ENCODE measurements at regions of chr16 and their contacts with region 1.

Region 1: DNA sequence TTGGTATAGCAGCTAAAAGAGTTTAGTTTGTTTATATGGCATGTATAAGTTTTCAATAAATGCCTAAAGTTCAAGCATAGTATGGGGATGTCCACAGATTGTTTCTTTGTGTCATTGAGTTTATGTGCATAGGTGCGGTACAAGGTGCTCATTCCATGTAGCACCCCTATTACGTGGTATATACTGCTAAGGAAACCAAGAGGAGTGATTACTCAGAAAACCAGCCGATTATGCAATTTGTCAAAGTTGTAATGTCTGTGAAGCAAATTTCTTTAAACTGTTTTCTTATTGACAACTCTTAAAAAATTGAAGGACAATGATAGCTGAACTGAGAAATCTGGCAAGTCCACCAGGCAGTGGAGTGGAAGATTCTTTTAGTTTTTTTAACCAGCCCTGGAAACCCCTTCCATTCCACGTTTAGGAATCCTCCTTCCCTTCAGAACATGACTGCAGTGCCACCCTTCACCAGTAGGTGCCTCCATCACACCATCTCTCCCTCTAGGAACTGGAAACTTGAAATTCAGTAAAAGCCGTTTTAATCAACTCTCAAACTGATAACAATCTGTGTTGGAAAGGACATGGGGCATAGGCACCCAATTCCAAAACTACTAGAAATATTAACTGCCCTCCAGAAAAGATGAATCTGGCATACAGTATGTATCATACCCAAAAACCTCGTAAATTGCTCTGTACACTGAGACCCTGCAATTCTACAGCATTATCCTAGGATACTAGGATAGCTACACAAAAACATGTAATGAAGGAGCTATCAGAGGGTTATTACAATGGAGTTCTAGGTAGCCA is 43.5 kb downstream of the REXO5 start:
- DNase-seq: peak in 1 of 2 donors; percentile 42
- ATAC-seq: peak in 1 of 2 donors; percentile 43
- H3K4me3 ChIP-seq: no peak overlapping the region
- H3K27ac ChIP-seq: peak overlapping the region in 3 of 4 donors; percentile 38 to 75 (median 72)
- H3K4me1 ChIP-seq: peaks cover 23 to 42% of the 10 kb centered on the region in 2 donors
- H3K27me3 ChIP-seq: no peaks in the 10 kb centered on the region
- CTCF ChIP-seq: peak; percentile 89 to 96 (median 96)
- POLR2A ChIP-seq: no peak

Region 2: GRCh38 chr16:20910781-20911321 is 61.1 kb after region 1 on chr16:
- in situ Hi-C with region 1: loop called in 2 of 4 experiments (anchors 10 kb)
- intact Hi-C with region 1: no loop called
- DNase-seq: no peak
- ATAC-seq: peak; percentile 73
- H3K4me3 ChIP-seq: no peak overlapping the region
- H3K27ac ChIP-seq: peak overlapping the region; percentile 55 to 64 (median 59)
- H3K4me1 ChIP-seq: peaks cover 24 to 31% of the 10 kb centered on the region in 2 donors
- H3K27me3 ChIP-seq: no peaks in the 10 kb centered on the region
- CTCF ChIP-seq: no peak
- POLR2A ChIP-seq: no peak

Region 3: DNA sequence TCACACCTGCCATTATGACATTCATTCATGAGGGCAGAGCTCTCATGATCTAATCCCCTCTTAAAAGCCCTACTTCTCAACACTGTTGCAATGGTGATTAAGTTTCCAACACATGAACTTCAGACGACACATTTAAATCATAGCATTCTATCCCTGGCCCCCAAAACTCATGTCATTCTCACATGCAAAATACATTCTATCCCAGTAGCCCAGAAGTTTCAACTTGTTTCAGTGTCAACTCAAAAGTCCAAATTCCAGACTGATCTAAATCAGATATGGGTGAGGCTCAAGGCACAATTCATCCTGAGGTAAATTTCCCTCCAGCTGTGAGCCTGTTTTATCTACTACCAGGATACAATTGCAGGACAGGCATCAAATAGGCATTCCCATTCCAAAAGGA is 76.0 kb after region 1 on chr16:
- in situ Hi-C with region 1: no loop called
- intact Hi-C with region 1: no loop called
- DNase-seq: no peak
- ATAC-seq: no peak
- H3K4me3 ChIP-seq: no peak overlapping the region
- H3K27ac ChIP-seq: no peak overlapping the region
- H3K4me1 ChIP-seq: peaks cover 6 to 7% of the 10 kb centered on the region in 2 donors
- H3K27me3 ChIP-seq: no peaks in the 10 kb centered on the region
- CTCF ChIP-seq: no peak
- POLR2A ChIP-seq: no peak

Region 4: DNA sequence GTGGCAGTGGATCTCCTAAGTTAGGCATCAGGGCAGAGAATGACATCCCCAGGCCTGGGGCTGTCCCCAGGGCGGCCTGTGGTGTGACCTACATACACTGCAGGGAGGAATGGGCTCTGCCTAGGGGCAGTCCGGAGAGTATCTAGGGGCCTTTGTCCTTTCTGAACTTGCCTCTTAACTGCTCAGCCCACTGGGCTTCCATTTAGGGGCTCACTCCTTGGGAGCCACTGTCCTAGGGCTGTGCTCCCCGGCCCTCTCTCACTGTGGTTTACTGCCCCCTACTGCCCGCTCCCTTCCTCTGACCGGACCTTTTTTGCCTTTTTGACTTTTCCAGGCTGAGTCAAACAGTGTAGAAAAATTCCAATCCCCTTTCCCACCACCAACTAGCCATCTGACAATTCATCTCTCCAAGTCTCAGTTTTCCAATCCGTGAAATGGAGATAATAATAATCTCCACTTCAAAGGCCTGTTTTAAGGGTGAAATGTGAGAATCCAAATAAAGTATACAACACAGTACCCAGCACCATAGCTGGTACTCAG is 234.0 kb after region 1 on chr16:
- in situ Hi-C with region 1: loop called in 3 of 4 experiments (anchors 5 to 10 kb)
- intact Hi-C with region 1: loop called (anchors 1 kb)
- DNase-seq: peak; percentile 20 to 33
- ATAC-seq: peak; percentile 74 to 77
- H3K4me3 ChIP-seq: no peak overlapping the region
- H3K27ac ChIP-seq: no peak overlapping the region
- H3K4me1 ChIP-seq: no peaks in the 10 kb centered on the region
- H3K27me3 ChIP-seq: no peaks in the 10 kb centered on the region
- CTCF ChIP-seq: peak; percentile 51 to 75 (median 74)
- POLR2A ChIP-seq: no peak

Region 5: DNA sequence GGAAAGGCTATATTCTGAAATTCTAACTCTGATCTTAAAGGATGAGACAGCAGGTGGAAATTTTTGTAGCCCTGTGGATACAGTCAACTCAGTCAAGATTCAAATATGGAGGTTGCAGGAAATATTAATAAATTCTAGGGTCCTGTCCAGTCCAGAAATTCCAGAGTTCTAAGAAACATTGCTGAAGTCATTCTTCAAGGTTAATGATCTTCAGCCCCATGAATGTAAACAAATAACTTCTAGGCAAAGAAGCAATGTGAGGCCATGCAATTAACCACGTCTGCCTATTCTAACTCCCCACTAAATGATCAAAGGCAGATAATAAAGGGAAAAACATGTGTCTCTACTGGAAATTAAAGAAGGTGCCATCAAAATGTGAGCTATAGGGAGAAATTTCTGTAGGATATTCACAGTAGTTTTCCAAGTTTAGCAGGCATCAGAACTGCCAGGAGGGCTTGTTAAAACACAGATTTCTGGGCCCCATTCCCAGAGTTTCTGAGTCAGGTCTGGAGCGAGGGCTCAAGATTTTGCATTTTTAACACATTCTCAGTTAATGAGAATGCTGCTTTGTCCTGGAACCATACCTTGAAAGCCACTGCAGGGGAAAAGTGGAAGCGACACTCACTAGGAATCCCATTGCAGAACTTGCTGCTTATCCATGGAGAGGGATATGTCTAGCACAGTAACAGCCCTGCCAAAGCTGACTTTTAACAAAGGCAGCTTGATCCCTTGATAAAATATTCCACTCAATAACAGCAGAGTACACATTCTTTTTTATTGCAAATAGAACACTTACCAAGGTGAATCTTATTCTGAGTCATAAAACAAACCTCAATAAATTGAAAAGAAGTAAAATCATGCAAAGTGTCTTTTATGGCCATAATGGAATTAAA is 239.1 kb after region 1 on chr16:
- in situ Hi-C with region 1: loop called in 3 of 4 experiments (anchors 5 to 10 kb)
- intact Hi-C with region 1: no loop called
- DNase-seq: no peak
- ATAC-seq: no peak
- H3K4me3 ChIP-seq: no peak overlapping the region
- H3K27ac ChIP-seq: no peak overlapping the region
- H3K4me1 ChIP-seq: no peaks in the 10 kb centered on the region
- H3K27me3 ChIP-seq: no peaks in the 10 kb centered on the region
- CTCF ChIP-seq: no peak
- POLR2A ChIP-seq: no peak

Region 6: GRCh38 chr16:21277927-21278706 is 428.3 kb after region 1 on chr16 and contains the start of gene CRYM:
- in situ Hi-C with region 1: loop called in 1 of 4 experiments (anchors 25 kb)
- intact Hi-C with region 1: no loop called
- DNase-seq: no peak
- ATAC-seq: peak in 1 of 2 donors; percentile 66
- H3K4me3 ChIP-seq: peak within 1 kb of the TSS; percentile 24 to 44 (median 39)
- H3K27ac ChIP-seq: no peak within 1 kb of the TSS
- H3K4me1 ChIP-seq: peaks cover 3 to 5% of the 10 kb centered on the region in 2 donors
- H3K27me3 ChIP-seq: peaks cover 12 to 20% (median 20%) of the 10 kb centered on the region in 3 donors
- CTCF ChIP-seq: peak in 4 of 5 experiments; percentile 17 to 81 (median 54)
- POLR2A ChIP-seq: no peak
- total RNA-seq, gene CRYM: not detected

Region 7: DNA sequence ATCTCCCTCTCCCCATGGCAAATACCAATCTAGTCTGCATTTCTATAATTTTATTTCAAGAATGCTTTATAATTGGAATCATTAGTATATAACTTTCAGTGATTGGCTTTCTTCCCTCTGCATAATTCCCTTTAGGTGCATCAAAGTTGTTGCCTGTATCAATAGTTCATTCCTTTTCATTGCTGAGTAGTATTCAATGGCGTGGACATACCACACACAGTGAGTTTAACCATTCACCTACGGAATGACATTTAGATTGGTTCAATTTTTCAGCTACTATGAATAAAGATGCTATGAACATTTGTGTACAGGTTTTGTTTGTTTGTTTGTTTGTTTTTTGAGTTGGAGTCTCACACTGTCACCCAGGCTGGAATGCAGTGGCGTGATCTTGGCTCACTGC is 823.7 kb after region 1 on chr16:
- in situ Hi-C with region 1: no loop called
- intact Hi-C with region 1: no loop called
- DNase-seq: no peak
- ATAC-seq: no peak
- H3K4me3 ChIP-seq: no peak overlapping the region
- H3K27ac ChIP-seq: no peak overlapping the region
- H3K4me1 ChIP-seq: no peaks in the 10 kb centered on the region
- H3K27me3 ChIP-seq: peaks cover 0 to 3% (median 0%) of the 10 kb centered on the region in 3 donors
- CTCF ChIP-seq: no peak
- POLR2A ChIP-seq: no peak

Measured in gastrocnemius medialis (tissue), 4 donors.